ENCODE measurements at regions of chr15 and their contacts with region 1.

Region 1: DNA sequence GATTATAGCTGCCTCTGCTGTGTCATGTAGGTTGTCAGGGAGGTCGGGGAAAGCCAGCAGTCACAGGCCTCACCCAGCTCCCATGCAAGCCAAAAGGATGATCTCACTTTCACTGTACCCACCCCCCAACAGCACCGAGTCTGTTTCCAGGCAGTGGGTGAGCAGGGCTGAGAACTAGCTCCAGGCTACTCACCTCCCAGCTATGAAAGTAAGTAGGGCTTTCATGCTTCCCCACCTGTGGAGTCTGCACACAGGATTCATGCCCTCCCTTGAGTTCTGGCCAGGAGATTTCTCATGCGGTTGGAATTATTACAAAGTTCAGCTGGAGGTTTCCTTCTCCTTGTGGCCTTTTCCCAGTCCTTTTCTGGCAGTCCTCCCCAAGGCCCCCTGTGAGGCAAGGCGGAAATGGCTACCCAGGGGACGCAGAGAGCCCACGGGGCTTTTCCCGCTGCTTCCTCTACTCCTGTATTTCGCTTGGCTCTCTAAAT is 356.2 kb downstream of the SV2B start:
- DNase-seq: peak; percentile 91 to 98
- H3K4me3 ChIP-seq: peak overlapping the region; percentile 39; the same call in 1 of the 2 replicates
- H3K27ac ChIP-seq: peak overlapping the region; percentile 99
- H3K4me1 ChIP-seq: peaks cover 31% of the 10 kb centered on the region
- H3K27me3 ChIP-seq: no peaks in the 10 kb centered on the region
- CTCF ChIP-seq: no peak

Region 2: DNA sequence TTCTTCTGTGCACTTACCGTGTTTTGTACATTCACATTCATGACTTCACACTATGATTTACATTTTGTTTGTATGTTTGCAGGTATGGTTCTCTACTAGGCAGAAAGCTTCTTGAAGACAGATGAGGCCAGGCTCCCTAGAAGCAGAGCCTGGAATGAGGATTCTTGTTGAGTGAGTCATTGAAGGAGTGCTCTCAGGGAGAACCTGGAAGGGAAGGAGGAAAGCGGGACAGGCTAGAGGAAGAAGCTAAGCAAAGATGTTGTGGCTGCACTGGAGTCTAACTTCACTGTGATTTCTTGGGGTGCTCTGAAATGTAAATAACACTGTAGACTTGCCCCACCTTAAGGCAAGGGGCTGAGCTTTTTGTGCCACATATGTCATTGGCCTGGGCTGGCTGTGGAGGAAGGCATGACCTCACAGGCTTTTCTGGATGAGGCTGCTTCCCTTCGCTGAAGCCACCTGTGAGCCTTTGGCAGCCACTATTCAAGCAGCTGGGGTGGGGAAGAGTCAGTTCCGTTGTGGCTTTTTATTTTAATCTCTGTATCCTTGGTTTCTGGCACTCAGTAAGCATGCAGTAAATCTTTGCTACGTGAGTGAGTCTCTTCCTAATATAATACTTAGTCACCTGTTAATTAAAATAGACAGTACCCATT is 48.9 kb before region 1 on chr15:
- CTCF ChIA-PET with region 1: no interaction called
- POLR2A ChIA-PET with region 1: interaction called, 3 read pairs
- intact Hi-C with region 1: loop called (anchors 2 kb)
- DNase-seq: peak; percentile 40 to 63
- H3K4me3 ChIP-seq: no peak overlapping the region
- H3K27ac ChIP-seq: no peak overlapping the region
- H3K4me1 ChIP-seq: peaks cover 11% of the 10 kb centered on the region
- H3K27me3 ChIP-seq: no peaks in the 10 kb centered on the region
- CTCF ChIP-seq: no peak

Region 3: DNA sequence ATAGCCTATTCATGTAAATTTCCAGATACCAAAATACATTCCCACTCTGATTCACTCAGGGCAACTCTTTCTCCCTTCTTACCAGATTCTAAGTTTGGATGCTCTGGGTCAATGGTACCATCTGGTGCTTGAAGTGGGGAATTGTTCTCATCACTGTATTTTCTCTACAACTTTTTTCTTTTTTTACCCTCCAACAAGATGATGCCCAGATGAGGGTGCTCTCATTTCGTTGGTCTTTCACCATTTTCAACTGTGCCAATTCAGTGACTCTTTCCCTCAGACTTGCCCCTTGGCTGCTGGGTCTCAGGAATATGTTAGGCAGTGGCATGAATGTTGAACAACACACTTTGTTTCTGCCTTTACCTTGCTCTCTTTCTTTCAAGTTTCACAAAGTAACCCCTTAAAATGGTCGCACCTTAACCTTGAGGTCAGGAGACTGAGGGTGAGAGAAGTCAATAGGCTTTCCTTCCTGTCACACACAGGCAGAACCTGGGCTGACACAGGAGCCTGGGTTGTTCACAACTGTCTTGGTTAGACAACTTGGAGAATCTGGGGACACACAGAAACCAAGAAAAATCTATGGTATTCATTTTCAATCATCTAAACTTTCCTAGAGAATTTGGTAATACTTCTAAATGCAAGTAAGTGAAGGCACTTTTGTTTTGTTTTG is 66.5 kb after region 1 on chr15:
- CTCF ChIA-PET with region 1: no interaction called
- POLR2A ChIA-PET with region 1: no interaction called
- intact Hi-C with region 1: loop called (anchors 1 kb)
- DNase-seq: no peak
- H3K4me3 ChIP-seq: no peak overlapping the region
- H3K27ac ChIP-seq: peak overlapping the region; percentile 56
- H3K4me1 ChIP-seq: peaks cover 9% of the 10 kb centered on the region
- H3K27me3 ChIP-seq: no peaks in the 10 kb centered on the region
- CTCF ChIP-seq: peak; percentile 48

Region 4: GRCh38 chr15:91561371-91562100 is 105.2 kb after region 1 on chr15:
- CTCF ChIA-PET with region 1: no interaction called
- POLR2A ChIA-PET with region 1: interaction called, 10 read pairs
- intact Hi-C with region 1: no loop called
- DNase-seq: peak; percentile 19 to 90
- H3K4me3 ChIP-seq: peak overlapping the region; percentile 25; the same call in 1 of the 2 replicates
- H3K27ac ChIP-seq: peak overlapping the region; percentile 96
- H3K4me1 ChIP-seq: peaks cover 32% of the 10 kb centered on the region
- H3K27me3 ChIP-seq: no peaks in the 10 kb centered on the region
- CTCF ChIP-seq: no peak

Region 5: GRCh38 chr15:91706322-91707032 is 250.2 kb after region 1 on chr15:
- CTCF ChIA-PET with region 1: no interaction called
- POLR2A ChIA-PET with region 1: interaction called, 3 read pairs
- intact Hi-C with region 1: loop called (anchors 2 kb)
- DNase-seq: peak; percentile 57 to 60
- H3K4me3 ChIP-seq: no peak overlapping the region
- H3K27ac ChIP-seq: no peak overlapping the region
- H3K4me1 ChIP-seq: peaks cover 14% of the 10 kb centered on the region
- H3K27me3 ChIP-seq: no peaks in the 10 kb centered on the region
- CTCF ChIP-seq: peak; percentile 92

Region 6: GRCh38 chr15:91947683-91948608 is 491.7 kb after region 1 on chr15:
- CTCF ChIA-PET with region 1: no interaction called
- POLR2A ChIA-PET with region 1: no interaction called
- intact Hi-C with region 1: loop called (anchors 1 kb)
- DNase-seq: peak; percentile 69 to 93
- H3K4me3 ChIP-seq: peak overlapping the region; percentile 39; the same call in 1 of the 2 replicates
- H3K27ac ChIP-seq: peak overlapping the region; percentile 100
- H3K4me1 ChIP-seq: peaks cover 94% of the 10 kb centered on the region
- H3K27me3 ChIP-seq: no peaks in the 10 kb centered on the region
- CTCF ChIP-seq: no peak

Region 7: GRCh38 chr15:92655178-92655995 is 1199.1 kb after region 1 on chr15 and contains the start of gene FAM174B:
- CTCF ChIA-PET with region 1: no interaction called
- POLR2A ChIA-PET with region 1: no interaction called
- intact Hi-C with region 1: loop called (anchors 10 kb)
- DNase-seq: peak in 1 of 2 experiments; percentile 51
- H3K4me3 ChIP-seq: peak within 1 kb of the TSS; percentile 55
- H3K27ac ChIP-seq: peak within 1 kb of the TSS; percentile 85
- H3K4me1 ChIP-seq: peaks cover 55% of the 10 kb centered on the region
- H3K27me3 ChIP-seq: no peaks in the 10 kb centered on the region
- CTCF ChIP-seq: no peak
- total RNA-seq, gene FAM174B: 77.5 and 90.3 TPM in 2 replicates

Measured in PC-9 (cell line).